Activated B cell treated with CpG ODN at 0.5 μM for 24 hours (primary cell): ENCODE measurements at regions of chr6 and their contacts with region 1.

Region 1: DNA sequence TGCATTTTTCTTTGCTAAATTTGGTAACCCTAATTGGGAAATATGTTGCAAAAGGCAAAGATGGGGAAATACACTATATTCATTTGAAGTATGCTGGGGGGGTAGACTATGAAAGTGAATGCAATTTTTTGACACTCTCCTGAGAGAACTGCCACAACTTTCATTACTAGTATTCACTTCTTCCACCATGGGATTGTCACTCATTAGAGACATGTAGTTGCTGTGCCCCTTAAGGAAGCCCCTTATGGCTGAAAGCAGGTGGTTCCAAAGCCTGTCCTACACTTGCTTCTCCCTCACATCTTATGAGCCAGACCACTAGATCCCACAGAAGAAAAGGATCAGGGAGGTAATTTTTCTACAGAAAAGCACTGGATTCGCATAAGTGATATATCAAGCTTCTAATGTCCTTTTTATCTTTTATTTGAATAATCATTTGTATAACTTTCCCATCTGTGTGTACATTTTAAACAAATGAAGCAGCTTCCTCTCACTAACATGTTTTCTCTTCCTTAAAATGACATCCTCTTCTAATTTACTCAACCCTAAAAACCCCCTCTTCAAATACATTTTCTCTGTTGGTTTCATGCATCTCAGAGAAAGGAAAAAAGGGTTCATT is 83.8 kb downstream of the GCLC start:
- DNase-seq: no peak
- ATAC-seq: peak; percentile 72
- H3K4me3 Mint-ChIP-seq: peak overlapping the region; percentile 72
- H3K27ac Mint-ChIP-seq: peak overlapping the region; percentile 96
- H3K4me1 Mint-ChIP-seq: peaks cover 94% of the 10 kb centered on the region
- H3K27me3 Mint-ChIP-seq: no peaks in the 10 kb centered on the region
- CTCF ChIP-seq: no peak

Region 2: GRCh38 chr6:53476964-53477363 is 15.8 kb after region 1 on chr6:
- CTCF ChIA-PET with region 1: interaction called, 6 read pairs
- POLR2A ChIA-PET with region 1: interaction called, 11 read pairs
- intact Hi-C with region 1: no loop called
- DNase-seq: no peak
- ATAC-seq: no peak
- H3K4me3 Mint-ChIP-seq: no peak overlapping the region
- H3K27ac Mint-ChIP-seq: no peak overlapping the region
- H3K4me1 Mint-ChIP-seq: peaks cover 31% of the 10 kb centered on the region
- H3K27me3 Mint-ChIP-seq: no peaks in the 10 kb centered on the region
- CTCF ChIP-seq: no peak

Region 3: DNA sequence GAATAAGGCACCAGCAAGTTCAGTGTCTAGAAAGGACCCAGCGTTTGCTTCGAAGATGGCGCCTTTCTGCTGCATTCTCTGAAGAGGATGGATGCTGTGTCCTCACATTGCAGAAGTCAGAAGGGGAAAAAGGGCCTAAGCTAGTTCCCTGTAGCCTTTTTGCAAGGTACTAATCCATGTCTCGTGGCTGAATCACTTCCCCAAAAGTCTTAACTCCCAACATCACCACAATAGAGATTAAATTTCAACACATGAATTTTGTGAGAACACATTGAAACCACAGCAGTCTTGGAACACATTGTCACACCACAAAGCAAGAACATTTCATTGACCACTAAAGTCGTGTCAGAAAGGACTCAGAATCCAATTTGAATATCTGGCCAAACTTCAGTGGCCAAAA is 162.3 kb after region 1 on chr6:
- CTCF ChIA-PET with region 1: no interaction called
- POLR2A ChIA-PET with region 1: no interaction called
- intact Hi-C with region 1: no loop called
- DNase-seq: no peak
- ATAC-seq: no peak
- H3K4me3 Mint-ChIP-seq: no peak overlapping the region
- H3K27ac Mint-ChIP-seq: no peak overlapping the region
- H3K4me1 Mint-ChIP-seq: no peaks in the 10 kb centered on the region
- H3K27me3 Mint-ChIP-seq: peaks cover 6% of the 10 kb centered on the region
- CTCF ChIP-seq: no peak